ENCODE measurements at regions of chr1 and their contacts with region 1.

Region 1: GRCh38 chr1:203475012-203475981 is at the start of gene PRELP:
- DNase-seq: peak; percentile 45 to 52
- H3K4me3 ChIP-seq: peak within 1 kb of the TSS in 1 of 3 donors; percentile 13
- H3K27ac ChIP-seq: peak within 1 kb of the TSS; percentile 17 to 71 (median 67)
- H3K4me1 ChIP-seq: peaks cover 0 to 17% of the 10 kb centered on the region in 2 donors
- H3K27me3 ChIP-seq: no peaks in the 10 kb centered on the region
- CTCF ChIP-seq: no peak
- POLR2A ChIP-seq: peak in 1 of 2 donors; percentile 38
- total RNA-seq, gene PRELP: 17.5 to 86.1 (median 35.4) TPM

Region 2: GRCh38 chr1:203428981-203429599 is 46.2 kb before region 1 on chr1:
- intact Hi-C with region 1: no loop called
- DNase-seq: peak; percentile 69 to 73
- H3K4me3 ChIP-seq: no peak overlapping the region
- H3K27ac ChIP-seq: no peak overlapping the region
- H3K4me1 ChIP-seq: no peaks in the 10 kb centered on the region
- H3K27me3 ChIP-seq: no peaks in the 10 kb centered on the region
- CTCF ChIP-seq: no peak
- POLR2A ChIP-seq: no peak

Region 3: GRCh38 chr1:203440771-203441170 is 34.5 kb before region 1 on chr1:
- intact Hi-C with region 1: loop called (anchors 5 kb)
- DNase-seq: peak; percentile 93 to 94
- H3K4me3 ChIP-seq: no peak overlapping the region
- H3K27ac ChIP-seq: peak overlapping the region; percentile 10 to 67 (median 61)
- H3K4me1 ChIP-seq: peaks cover 0 to 15% of the 10 kb centered on the region in 2 donors
- H3K27me3 ChIP-seq: no peaks in the 10 kb centered on the region
- CTCF ChIP-seq: peak in 5 of 6 experiments; percentile 34 to 86 (median 69)
- POLR2A ChIP-seq: no peak

Region 4: GRCh38 chr1:203534527-203535230 is 59.4 kb after region 1 on chr1:
- intact Hi-C with region 1: no loop called
- DNase-seq: peak; percentile 24 to 29
- H3K4me3 ChIP-seq: no peak overlapping the region
- H3K27ac ChIP-seq: no peak overlapping the region
- H3K4me1 ChIP-seq: no peaks in the 10 kb centered on the region
- H3K27me3 ChIP-seq: no peaks in the 10 kb centered on the region
- CTCF ChIP-seq: no peak
- POLR2A ChIP-seq: no peak

Measured in thyroid gland (tissue), 4 donors.